Endothelial cell of umbilical vein (primary cell): ENCODE measurements at regions of chr14 and their contacts with region 1.

Region 1: DNA sequence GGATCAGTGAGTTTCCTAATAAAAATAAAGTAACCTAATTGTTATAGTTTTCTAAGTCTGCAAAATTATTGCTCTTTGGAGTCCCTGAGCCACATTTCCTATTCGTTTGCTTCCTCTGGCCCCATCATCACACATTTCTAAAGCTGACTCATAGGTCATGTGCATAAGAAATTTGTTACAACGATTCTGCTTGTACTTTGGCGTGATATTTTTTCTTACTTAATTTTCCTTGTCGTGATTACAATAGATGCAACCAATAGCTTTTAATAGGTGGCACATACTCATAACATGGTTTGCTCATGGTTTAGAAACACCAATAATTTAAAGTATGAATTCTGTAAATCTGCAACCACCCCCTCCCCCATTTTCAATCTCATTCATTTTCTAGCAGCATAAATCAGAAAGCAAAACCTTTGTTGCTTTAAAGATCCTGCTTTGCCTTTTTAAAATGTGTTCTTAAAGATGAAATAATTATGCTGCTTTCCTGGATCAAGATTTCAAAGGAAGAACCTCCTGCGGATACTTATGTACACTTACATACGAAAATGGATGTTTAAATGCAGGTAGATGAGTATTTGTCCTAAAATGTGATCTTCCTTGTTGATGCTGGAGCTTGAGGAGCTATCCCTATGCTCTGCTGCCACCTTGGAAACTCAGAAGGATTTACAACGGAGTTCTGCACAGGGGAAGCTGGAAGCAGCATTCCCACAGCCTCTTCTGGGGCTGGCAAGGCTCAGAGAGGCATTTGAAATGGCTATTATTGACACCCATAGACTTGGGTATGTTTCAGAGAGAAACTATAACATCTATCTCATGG is 1.7 kb upstream of the FLRT2 start:
- DNase-seq: peak; percentile 94
- H3K4me3 ChIP-seq: peak overlapping the region; percentile 38 to 94 (median 93)
- H3K27ac ChIP-seq: peak overlapping the region; percentile 93
- H3K4me1 ChIP-seq: peaks cover 19% of the 10 kb centered on the region
- H3K27me3 ChIP-seq: no peaks in the 10 kb centered on the region
- CTCF ChIP-seq: peak; percentile 52 to 65
- POLR2A ChIP-seq: peak; percentile 39

Region 2: DNA sequence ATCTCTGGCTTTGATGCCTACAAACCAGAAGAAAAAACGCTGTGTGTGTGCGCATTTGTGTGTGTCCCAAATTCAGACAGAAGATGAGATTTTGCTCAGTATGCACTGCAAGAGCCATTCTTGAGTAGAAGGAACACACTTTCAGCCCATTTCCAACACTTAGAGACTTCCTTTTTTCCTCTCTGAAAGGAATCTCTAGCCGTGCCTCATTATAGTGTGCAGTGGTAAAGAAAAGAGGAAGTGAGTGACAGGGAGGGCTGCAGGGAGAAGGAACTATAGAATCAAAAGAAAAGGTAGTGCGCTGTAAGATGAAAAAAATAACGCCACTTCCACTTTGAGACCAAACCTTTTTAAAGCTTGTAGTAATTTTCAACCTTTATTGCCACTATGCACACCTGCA is 1399.3 kb before region 1 on chr14:
- CTCF ChIA-PET with region 1: no interaction called
- POLR2A ChIA-PET with region 1: no interaction called
- dilution Hi-C with region 1: no loop called
- intact Hi-C with region 1: loop called (anchors 10 kb)
- DNase-seq: peak; percentile 31
- H3K4me3 ChIP-seq: no peak overlapping the region
- H3K27ac ChIP-seq: no peak overlapping the region
- H3K4me1 ChIP-seq: peaks cover 21% of the 10 kb centered on the region
- H3K27me3 ChIP-seq: no peaks in the 10 kb centered on the region
- CTCF ChIP-seq: no peak
- POLR2A ChIP-seq: no peak

Region 3: GRCh38 chr14:84622357-84622756 is 905.9 kb before region 1 on chr14:
- CTCF ChIA-PET with region 1: interaction called, 3 read pairs
- POLR2A ChIA-PET with region 1: interaction called, 3 read pairs
- dilution Hi-C with region 1: no loop called
- intact Hi-C with region 1: loop called (anchors 10 kb)
- DNase-seq: peak; percentile 94
- H3K4me3 ChIP-seq: no peak overlapping the region
- H3K27ac ChIP-seq: no peak overlapping the region
- H3K4me1 ChIP-seq: peaks cover 16% of the 10 kb centered on the region
- H3K27me3 ChIP-seq: no peaks in the 10 kb centered on the region
- CTCF ChIP-seq: no peak
- POLR2A ChIP-seq: no peak

Region 4: DNA sequence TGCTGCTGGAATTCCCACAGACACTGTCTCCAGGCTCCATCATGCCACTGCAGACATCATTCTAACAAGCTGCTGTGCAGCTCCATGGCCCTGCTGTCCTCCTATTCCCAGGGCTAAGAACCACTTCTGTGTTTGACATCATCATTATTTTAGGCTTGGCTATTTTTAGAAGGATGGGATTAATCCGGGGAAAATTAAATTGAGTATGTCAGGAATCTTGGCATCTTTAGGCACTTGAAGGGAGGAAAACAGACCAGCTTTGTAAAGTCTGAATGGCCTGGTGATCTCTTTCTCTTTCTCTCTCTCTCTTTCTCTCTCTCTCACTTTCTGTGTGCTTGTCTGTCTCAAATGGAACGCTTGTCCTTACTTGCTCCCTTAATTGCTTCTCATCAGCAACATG is 566.7 kb before region 1 on chr14:
- CTCF ChIA-PET with region 1: interaction called, 23 read pairs
- POLR2A ChIA-PET with region 1: interaction called, 4 read pairs
- dilution Hi-C with region 1: no loop called
- intact Hi-C with region 1: loop called (anchors 1 kb)
- DNase-seq: no peak
- H3K4me3 ChIP-seq: no peak overlapping the region
- H3K27ac ChIP-seq: no peak overlapping the region
- H3K4me1 ChIP-seq: peaks cover 35% of the 10 kb centered on the region
- H3K27me3 ChIP-seq: no peaks in the 10 kb centered on the region
- CTCF ChIP-seq: no peak
- POLR2A ChIP-seq: no peak

Region 5: GRCh38 chr14:85273099-85273677 is 255.1 kb before region 1 on chr14:
- CTCF ChIA-PET with region 1: interaction called, 5 read pairs
- POLR2A ChIA-PET with region 1: no interaction called
- dilution Hi-C with region 1: no loop called
- intact Hi-C with region 1: loop called (anchors 2 kb)
- DNase-seq: peak; percentile 83
- H3K4me3 ChIP-seq: peak overlapping the region in 1 of 3 experiments; percentile 25
- H3K27ac ChIP-seq: no peak overlapping the region
- H3K4me1 ChIP-seq: peaks cover 8% of the 10 kb centered on the region
- H3K27me3 ChIP-seq: no peaks in the 10 kb centered on the region
- CTCF ChIP-seq: no peak
- POLR2A ChIP-seq: no peak

Region 6: GRCh38 chr14:85415015-85415712 is 113.1 kb before region 1 on chr14:
- CTCF ChIA-PET with region 1: interaction called, 7 read pairs
- POLR2A ChIA-PET with region 1: interaction called, 3 read pairs
- dilution Hi-C with region 1: no loop called
- intact Hi-C with region 1: loop called (anchors 1 kb)
- DNase-seq: peak; percentile 67
- H3K4me3 ChIP-seq: no peak overlapping the region
- H3K27ac ChIP-seq: peak overlapping the region; percentile 79
- H3K4me1 ChIP-seq: peaks cover 38% of the 10 kb centered on the region
- H3K27me3 ChIP-seq: no peaks in the 10 kb centered on the region
- CTCF ChIP-seq: peak in 1 of 2 donors; percentile 28
- POLR2A ChIP-seq: no peak

Region 7: GRCh38 chr14:85501751-85502150 is 26.5 kb before region 1 on chr14:
- CTCF ChIA-PET with region 1: no interaction called
- POLR2A ChIA-PET with region 1: no interaction called
- dilution Hi-C with region 1: no loop called
- intact Hi-C with region 1: no loop called
- DNase-seq: no peak
- H3K4me3 ChIP-seq: no peak overlapping the region
- H3K27ac ChIP-seq: no peak overlapping the region
- H3K4me1 ChIP-seq: no peaks in the 10 kb centered on the region
- H3K27me3 ChIP-seq: no peaks in the 10 kb centered on the region
- CTCF ChIP-seq: no peak
- POLR2A ChIP-seq: no peak